ENCODE measurements at regions of chr11 and their contacts with region 1.

Region 1: GRCh38 chr11:59753650-59754493 is 1.3 kb upstream of the STX3 start:
- DNase-seq: peak; percentile 80 to 87 (median 87)
- H3K4me3 ChIP-seq: peak overlapping the region; percentile 63 to 94 (median 82)
- H3K4me3 Mint-ChIP-seq: peak overlapping the region; percentile 99
- H3K27ac ChIP-seq: peak overlapping the region in 1 of 2 donors; percentile 77
- H3K27ac Mint-ChIP-seq: peak overlapping the region; percentile 76 to 92 (median 90)
- H3K4me1 ChIP-seq: peaks cover 31 to 38% of the 10 kb centered on the region in 2 donors
- H3K4me1 Mint-ChIP-seq: peaks cover 38% of the 10 kb centered on the region
- H3K27me3 ChIP-seq: no peaks in the 10 kb centered on the region
- H3K27me3 Mint-ChIP-seq: peaks cover 0 to 3% (median 0%) of the 10 kb centered on the region in 3 donors
- CTCF ChIP-seq: peak; percentile 90

Region 2: DNA sequence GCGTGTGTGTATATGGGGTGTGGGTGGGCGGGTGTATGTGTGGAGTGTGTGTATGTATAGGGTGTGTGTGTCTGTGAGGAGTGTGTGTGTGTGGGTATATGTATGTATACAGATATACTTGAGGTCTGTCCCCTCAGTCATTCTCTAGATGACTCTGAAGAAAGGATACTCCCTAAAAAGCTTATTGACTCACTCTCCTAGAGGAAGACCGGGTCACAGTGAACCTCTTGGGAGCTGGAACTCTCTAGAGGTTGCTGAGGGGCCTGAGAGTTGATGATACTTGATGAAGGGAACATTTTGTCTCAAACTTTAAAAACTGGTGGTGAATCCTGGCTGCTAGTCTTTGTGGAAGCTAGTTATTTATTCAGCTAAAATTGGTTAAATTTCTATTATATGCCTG is 16.4 kb after region 1 on chr11:
- intact Hi-C with region 1: loop called in 1 of 2 experiments (anchors 2 kb)
- DNase-seq: no peak
- H3K4me3 ChIP-seq: no peak overlapping the region
- H3K4me3 Mint-ChIP-seq: no peak overlapping the region
- H3K27ac ChIP-seq: peak overlapping the region in 1 of 2 donors; percentile 49
- H3K27ac Mint-ChIP-seq: peak overlapping the region in 5 of 7 donors; percentile 54 to 80 (median 78)
- H3K4me1 ChIP-seq: peaks cover 68 to 77% of the 10 kb centered on the region in 2 donors
- H3K4me1 Mint-ChIP-seq: peaks cover 30% of the 10 kb centered on the region
- H3K27me3 ChIP-seq: no peaks in the 10 kb centered on the region
- H3K27me3 Mint-ChIP-seq: no peaks in the 10 kb centered on the region
- CTCF ChIP-seq: no peak

Region 3: DNA sequence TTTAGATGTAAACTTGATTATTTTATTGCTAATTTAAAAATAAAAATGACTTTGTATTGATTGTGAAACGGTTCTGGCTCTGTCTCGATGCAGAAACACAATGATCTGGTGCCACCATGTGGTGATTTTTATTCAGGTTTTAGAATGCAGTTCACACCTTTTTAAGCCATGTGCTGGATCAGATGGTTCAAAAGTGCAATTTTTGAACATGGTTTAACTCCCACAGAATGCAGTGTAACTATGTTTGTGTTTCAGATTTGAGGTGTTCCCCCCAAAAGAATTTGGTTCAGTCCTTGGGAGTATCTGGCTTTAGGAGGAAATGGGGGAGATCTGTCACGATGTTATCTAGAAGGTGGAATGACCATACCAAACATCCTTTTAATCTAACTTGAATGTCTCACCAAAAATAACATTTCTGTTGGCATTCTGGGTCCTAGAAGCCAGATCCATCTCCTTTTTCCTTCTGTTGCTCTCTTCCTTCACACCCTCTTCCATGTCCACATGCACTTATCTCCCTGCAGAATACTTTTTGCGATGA is 48.8 kb after region 1 on chr11:
- intact Hi-C with region 1: loop called (anchors 2 kb)
- DNase-seq: peak; percentile 47 to 71 (median 60)
- H3K4me3 ChIP-seq: no peak overlapping the region
- H3K4me3 Mint-ChIP-seq: no peak overlapping the region
- H3K27ac ChIP-seq: no peak overlapping the region
- H3K27ac Mint-ChIP-seq: no peak overlapping the region
- H3K4me1 ChIP-seq: no peaks in the 10 kb centered on the region
- H3K4me1 Mint-ChIP-seq: no peaks in the 10 kb centered on the region
- H3K27me3 ChIP-seq: no peaks in the 10 kb centered on the region
- H3K27me3 Mint-ChIP-seq: peaks cover 0 to 1% (median 0%) of the 10 kb centered on the region in 3 donors
- CTCF ChIP-seq: peak; percentile 80

Measured in CD14-positive monocyte (primary cell).